ENCODE measurements at regions of chr2 and their contacts with region 1.

Region 1: DNA sequence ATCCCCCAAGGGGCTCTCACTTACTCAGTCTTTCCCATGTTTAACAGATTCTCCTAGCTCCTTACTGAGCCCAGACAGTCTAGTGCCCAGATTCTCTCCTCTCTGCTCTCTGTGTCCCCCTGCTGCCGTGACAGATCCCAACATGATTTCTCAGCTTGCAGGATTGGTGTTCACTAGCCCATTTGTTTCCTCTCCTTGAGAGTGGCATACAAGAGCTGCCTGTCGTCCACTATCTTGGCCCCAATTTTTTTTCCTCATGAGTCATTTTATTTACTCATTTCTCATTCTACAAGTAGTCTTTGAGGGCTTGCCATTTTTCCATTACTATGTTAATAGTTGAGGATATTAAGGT is 199.9 kb upstream of the FN1 start:
- DNase-seq: peak; percentile 48
- ATAC-seq: peak; percentile 73
- H3K4me3 ChIP-seq: no peak overlapping the region
- H3K27ac ChIP-seq: no peak overlapping the region
- H3K4me1 ChIP-seq: peaks cover 2% of the 10 kb centered on the region; the same call in 1 of the 2 replicates
- H3K27me3 ChIP-seq: no peaks in the 10 kb centered on the region
- CTCF ChIP-seq: peak; percentile 26; the same call in 1 of the 2 replicates
- POLR2A ChIP-seq: no peak
- RAD21 ChIP-seq: peak; percentile 38

Region 2: GRCh38 chr2:215664847-215665525 is 29.2 kb after region 1 on chr2:
- CTCF ChIA-PET with region 1: no interaction called
- POLR2A ChIA-PET with region 1: no interaction called
- dilution Hi-C with region 1: no loop called
- in situ Hi-C with region 1: no loop called
- intact Hi-C with region 1: loop called (anchors 1 kb)
- DNase-seq: peak; percentile 93
- ATAC-seq: peak; percentile 63
- H3K4me3 ChIP-seq: no peak overlapping the region
- H3K27ac ChIP-seq: 0 out of 2 replicates have a peak overlapping the region, but pooled peaks have one; percentile 3
- H3K4me1 ChIP-seq: peaks cover 10% of the 10 kb centered on the region
- H3K27me3 ChIP-seq: no peaks in the 10 kb centered on the region
- CTCF ChIP-seq: no peak
- POLR2A ChIP-seq: no peak
- RAD21 ChIP-seq: peak; percentile 31; the same call in 1 of the 2 replicates

Region 3: GRCh38 chr2:215811409-215812345 is 175.9 kb after region 1 on chr2:
- CTCF ChIA-PET with region 1: no interaction called
- POLR2A ChIA-PET with region 1: no interaction called
- dilution Hi-C with region 1: no loop called
- in situ Hi-C with region 1: no loop called
- intact Hi-C with region 1: no loop called
- DNase-seq: no peak
- ATAC-seq: no peak
- H3K4me3 ChIP-seq: no peak overlapping the region
- H3K27ac ChIP-seq: no peak overlapping the region
- H3K4me1 ChIP-seq: peaks cover 4% of the 10 kb centered on the region; the same call in 1 of the 2 replicates
- H3K27me3 ChIP-seq: no peaks in the 10 kb centered on the region; the same call in 1 of the 2 replicates
- CTCF ChIP-seq: no peak
- POLR2A ChIP-seq: no peak
- RAD21 ChIP-seq: no peak